ENCODE measurements at regions of chr11 and their contacts with region 1.

Region 1: DNA sequence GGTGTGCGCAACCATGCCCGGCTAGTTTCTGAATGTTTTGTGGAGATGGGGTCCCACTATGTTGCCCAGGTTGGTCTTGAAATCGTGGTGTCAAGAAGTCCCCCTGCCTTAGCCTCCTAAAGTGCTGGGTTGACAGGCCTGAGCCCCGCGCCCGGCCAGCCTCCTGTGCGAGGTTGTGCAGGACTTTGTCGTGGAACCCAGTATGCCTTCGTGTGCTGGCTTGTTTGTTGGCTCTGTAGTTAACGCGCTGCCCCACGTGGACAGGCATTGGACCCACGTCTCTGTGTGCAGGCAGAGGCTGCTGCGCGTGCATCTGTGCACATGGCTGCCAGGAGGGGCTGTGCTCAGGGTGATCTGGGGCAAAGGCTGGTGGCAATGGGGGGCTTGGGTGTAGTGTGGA is 33.9 kb upstream of the ZNF195 start:
- ATAC-seq: no peak
- H3K4me3 ChIP-seq: no peak overlapping the region
- H3K27ac ChIP-seq: no peak overlapping the region
- H3K4me1 ChIP-seq: no peaks in the 10 kb centered on the region

Region 2: DNA sequence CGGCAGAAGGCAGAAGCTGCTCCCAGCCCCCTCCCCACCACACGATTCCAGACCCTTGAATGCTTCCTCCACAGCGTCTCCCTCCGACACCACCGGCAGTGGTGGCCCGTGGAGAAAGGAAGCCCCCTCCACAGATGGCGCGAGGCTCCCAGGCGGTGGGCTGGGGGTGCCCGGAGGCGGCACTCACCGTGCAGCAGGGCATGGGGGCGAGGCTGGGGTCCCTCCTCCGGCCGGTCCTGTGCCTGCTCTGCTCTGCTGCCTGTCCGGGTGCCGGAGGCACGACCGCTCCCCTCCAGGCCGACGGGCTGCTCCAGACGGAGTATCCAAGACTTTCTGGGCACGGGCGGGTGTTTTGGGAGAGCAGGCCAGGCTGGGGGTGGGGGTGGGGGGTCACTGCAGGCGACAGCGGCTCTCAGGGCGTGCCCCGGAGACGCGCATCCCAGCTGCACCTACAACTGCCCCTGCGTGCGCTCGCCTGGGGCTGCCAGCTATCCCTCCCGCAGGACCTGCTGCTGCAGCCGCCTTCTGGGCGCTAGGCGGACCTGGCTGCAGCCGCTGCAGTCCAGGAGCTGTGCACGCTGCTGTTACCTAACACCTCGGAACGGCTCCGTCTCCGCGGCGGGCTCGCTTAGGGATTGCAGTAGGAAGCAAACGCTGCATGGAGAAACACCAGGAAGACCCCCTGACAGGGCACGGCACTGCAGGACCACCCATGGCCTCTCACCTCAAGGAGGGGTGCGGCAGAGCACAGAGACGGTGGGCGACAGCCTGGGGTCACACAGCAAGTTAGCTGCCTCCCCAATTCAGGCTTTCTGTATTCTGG is 209.4 kb before region 1 on chr11:
- in situ Hi-C with region 1: loop called in 1 of 9 experiments (anchors 25 kb)
- ATAC-seq: peak; percentile 72 to 85 (median 79)
- H3K4me3 ChIP-seq: peak overlapping the region in 1 of 5 donors; percentile 4
- H3K27ac ChIP-seq: no peak overlapping the region
- H3K4me1 ChIP-seq: peaks cover 0 to 5% of the 10 kb centered on the region in 2 donors